A549 (cell line): ENCODE measurements at regions of chr6 and their contacts with region 1.

Region 1: DNA sequence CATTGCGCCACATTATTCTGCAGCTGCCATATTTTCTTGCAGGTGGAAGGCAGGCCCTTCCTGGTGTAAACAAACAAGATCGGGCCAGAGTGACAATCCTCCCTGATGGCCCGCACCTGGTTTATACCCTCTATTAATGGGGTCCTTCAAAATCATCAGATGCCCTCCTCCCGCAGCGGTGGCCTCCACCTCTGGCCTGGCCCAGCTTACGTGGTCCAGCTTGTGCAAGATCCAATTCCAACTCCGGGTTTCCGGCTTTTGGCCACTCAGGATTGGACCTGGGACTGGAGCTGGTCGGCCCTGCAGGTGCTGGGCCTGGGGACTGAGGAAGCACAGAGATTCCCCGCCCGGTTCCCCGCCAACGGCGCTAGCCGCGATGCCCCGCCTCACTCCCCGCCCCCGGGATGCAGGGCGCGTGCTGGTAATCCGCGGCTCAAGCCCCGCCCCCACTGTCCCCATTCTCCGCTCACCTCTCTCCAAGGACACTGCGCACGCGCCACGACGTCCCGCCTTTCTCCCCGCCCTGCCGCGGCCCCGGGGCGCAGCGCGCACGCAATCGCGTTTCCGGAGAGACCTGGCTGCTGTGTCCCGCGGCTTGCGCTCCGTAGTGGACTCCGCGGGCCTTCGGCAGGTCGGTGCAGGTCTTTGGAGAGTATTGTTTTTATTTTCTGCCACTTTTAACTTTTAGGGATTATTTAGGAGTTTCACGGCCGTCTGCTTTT is at the start of gene TMEM14B:
- DNase-seq: peak; percentile 81 to 94
- ATAC-seq: peak; percentile 95 to 98
- H3K4me3 ChIP-seq: peak within 1 kb of the TSS; percentile 95
- H3K27ac ChIP-seq: peak within 1 kb of the TSS; percentile 90 to 96
- H3K4me1 ChIP-seq: peaks cover 20% of the 10 kb centered on the region
- CTCF ChIP-seq: no peak
- EP300 ChIP-seq: no peak
- POLR2A ChIP-seq: peak; percentile 88
- RAD21 ChIP-seq: peak in 1 of 2 experiments; percentile 24; a peak in 1 of 5 replicates
- polyA plus RNA-seq, gene TMEM14B: 113 and 177 TPM in 2 replicates

Region 2: GRCh38 chr6:10759312-10759839 is 12.0 kb after region 1 on chr6:
- CTCF ChIA-PET with region 1: interaction called, 18 read pairs
- POLR2A ChIA-PET with region 1: no interaction called
- DNase-seq: peak; percentile 60 to 91
- ATAC-seq: peak; percentile 84 to 87
- H3K4me3 ChIP-seq: no peak overlapping the region
- H3K27ac ChIP-seq: peak overlapping the region; percentile 48 to 87
- H3K4me1 ChIP-seq: peaks cover 30% of the 10 kb centered on the region
- CTCF ChIP-seq: peak; percentile 44
- EP300 ChIP-seq: peak in 1 of 2 experiments; percentile 35; a peak in 1 of 5 replicates
- POLR2A ChIP-seq: no peak
- RAD21 ChIP-seq: peak in 1 of 2 experiments; percentile 52; a peak in 3 of 5 replicates